ENCODE measurements at regions of chr18 and their contacts with region 1.

Region 1: GRCh38 chr18:46073474-46074331 is 1.6 kb upstream of the PSTPIP2 start:
- DNase-seq: peak; percentile 83
- H3K4me3 Mint-ChIP-seq: no peak overlapping the region
- H3K27ac Mint-ChIP-seq: no peak overlapping the region
- H3K4me1 Mint-ChIP-seq: peaks cover 33% of the 10 kb centered on the region
- H3K27me3 Mint-ChIP-seq: no peaks in the 10 kb centered on the region
- CTCF ChIP-seq: peak; percentile 47

Region 2: DNA sequence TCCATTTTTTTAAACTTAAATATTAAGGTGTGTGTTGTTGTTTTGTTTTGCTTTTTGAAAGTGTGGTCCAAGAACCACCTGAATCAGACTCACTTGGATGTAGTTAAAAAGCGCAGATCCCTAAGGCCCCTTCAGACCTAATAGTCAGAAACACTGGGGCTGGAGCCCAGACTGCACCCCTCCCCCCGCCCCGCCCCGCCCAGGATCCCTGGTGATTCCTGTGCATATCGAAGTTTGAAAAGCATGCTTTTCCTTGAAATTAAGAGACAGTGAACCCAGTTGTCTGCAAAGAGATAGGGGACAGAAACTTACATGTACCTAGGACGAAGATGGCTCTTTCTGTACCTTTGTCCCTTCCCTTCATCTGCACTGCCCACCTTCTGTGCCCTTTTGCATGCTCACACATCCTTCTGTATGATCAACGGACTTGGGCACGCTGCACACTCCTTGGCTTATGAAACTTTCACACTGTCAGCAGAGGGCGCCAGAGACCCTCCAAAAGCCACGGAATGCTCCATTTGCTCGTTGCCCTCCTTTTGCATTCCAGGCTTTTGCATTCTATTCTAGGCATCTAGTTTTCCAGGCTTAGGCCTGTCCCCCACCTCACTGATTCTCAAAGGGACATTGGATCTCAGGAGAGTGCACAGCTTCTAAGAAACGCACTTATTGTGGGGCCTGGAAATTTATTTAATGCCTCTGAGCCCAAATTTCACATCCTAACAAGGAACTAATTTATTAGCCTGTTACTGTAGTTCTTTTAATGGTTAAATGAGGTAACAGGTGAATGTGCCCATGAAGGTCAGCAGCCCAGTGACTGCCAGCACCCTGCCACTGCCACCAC is 382.5 kb before region 1 on chr18:
- CTCF ChIA-PET with region 1: interaction called, 3 read pairs
- POLR2A ChIA-PET with region 1: no interaction called
- intact Hi-C with region 1: loop called (anchors 1 kb)
- DNase-seq: peak; percentile 86
- H3K4me3 Mint-ChIP-seq: no peak overlapping the region
- H3K27ac Mint-ChIP-seq: no peak overlapping the region
- H3K4me1 Mint-ChIP-seq: peaks cover 10% of the 10 kb centered on the region
- H3K27me3 Mint-ChIP-seq: peaks cover 11% of the 10 kb centered on the region
- CTCF ChIP-seq: peak; percentile 90

Region 3: DNA sequence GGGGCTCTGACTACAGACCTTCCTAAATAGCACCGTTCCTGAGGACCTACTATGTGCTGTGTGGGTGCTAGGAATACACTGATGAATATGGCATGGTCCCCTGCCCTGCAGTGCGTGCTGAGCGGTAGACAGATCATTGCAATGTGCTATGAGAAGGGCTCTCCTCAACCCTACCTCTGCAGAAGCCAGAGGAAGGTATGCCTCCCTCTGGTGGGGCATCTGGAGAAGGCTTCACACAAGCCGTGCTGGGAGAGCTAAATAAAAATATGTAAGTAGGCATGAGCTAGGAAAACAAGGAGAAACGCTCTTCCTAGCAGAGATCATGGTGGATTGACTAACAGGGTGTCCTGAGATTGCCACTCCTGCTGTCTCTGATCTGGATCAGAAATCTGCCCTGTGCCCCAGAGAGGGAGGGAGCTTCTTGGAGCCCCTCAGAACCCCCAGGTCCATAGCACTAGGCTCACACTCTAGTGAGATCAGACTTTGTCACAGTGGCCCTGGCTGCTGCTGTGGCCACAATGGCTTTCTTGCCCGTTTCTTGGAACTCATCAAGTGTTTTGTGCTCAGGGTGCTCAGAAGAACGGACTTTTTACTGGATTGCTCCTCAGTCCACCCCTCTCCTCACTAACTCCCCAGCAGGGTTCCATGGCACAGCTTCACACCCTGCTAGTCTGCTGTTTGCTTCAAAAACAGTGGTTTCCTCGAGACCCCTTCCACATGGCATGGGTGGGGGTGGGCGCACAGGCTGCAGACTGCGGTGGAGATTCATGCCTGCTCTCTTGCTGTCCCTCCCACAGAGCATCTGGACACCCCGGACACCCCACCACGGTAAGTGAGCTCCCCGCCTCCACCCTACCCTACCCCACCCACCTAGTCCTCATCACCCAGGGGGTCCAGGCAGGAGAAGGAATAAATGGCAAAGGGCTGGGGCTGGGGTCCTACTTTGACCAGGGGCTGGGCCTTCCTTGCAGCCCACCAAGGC is 234.0 kb before region 1 on chr18:
- CTCF ChIA-PET with region 1: no interaction called
- POLR2A ChIA-PET with region 1: no interaction called
- intact Hi-C with region 1: no loop called
- DNase-seq: peak; percentile 71
- H3K4me3 Mint-ChIP-seq: no peak overlapping the region
- H3K27ac Mint-ChIP-seq: no peak overlapping the region
- H3K4me1 Mint-ChIP-seq: no peaks in the 10 kb centered on the region
- H3K27me3 Mint-ChIP-seq: peaks cover 13% of the 10 kb centered on the region
- CTCF ChIP-seq: peak; percentile 48

Region 4: GRCh38 chr18:45920367-45920766 is 153.3 kb before region 1 on chr18:
- CTCF ChIA-PET with region 1: interaction called, 6 read pairs
- POLR2A ChIA-PET with region 1: interaction called, 8 read pairs
- intact Hi-C with region 1: loop called (anchors 2 kb)
- DNase-seq: peak; percentile 97
- H3K4me3 Mint-ChIP-seq: no peak overlapping the region
- H3K27ac Mint-ChIP-seq: no peak overlapping the region
- H3K4me1 Mint-ChIP-seq: peaks cover 16% of the 10 kb centered on the region
- H3K27me3 Mint-ChIP-seq: no peaks in the 10 kb centered on the region
- CTCF ChIP-seq: no peak

Region 5: DNA sequence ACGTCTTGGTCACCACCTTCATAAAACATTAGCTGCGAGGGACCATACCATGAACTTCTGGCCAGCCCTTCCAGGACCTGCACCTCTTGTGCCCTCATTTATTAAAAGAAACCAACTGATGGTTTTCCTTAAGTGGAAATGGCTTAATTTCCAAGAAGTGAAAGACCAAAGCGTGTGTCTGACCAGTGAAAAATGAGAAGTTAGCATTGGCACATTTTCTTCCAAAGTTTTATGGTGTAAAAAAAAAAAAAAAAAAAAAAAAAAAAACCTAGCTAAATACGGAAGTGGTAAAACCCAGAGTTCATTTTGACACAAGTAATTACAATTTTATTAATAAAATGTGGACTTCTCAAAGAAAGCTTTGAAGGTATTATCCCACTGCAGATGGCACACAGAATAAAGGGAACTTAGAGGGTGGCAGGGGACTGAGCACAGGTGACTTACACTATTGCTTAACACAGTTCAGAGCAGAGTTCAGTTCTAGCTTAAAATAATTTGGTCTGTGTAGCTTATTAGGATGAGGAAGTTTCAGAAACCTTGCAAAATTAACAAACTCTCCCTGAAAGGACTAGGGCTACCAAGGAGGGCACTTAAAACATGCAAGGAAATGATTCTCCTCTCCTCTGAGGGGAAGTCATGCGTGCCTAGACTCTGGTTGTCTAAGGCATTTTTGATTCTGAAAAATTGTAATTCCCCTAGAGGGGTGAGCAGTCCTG is 64.4 kb before region 1 on chr18:
- CTCF ChIA-PET with region 1: interaction called, 14 read pairs
- POLR2A ChIA-PET with region 1: interaction called, 5 read pairs
- intact Hi-C with region 1: no loop called
- DNase-seq: no peak
- H3K4me3 Mint-ChIP-seq: no peak overlapping the region
- H3K27ac Mint-ChIP-seq: no peak overlapping the region
- H3K4me1 Mint-ChIP-seq: no peaks in the 10 kb centered on the region
- H3K27me3 Mint-ChIP-seq: no peaks in the 10 kb centered on the region
- CTCF ChIP-seq: no peak

Region 6: GRCh38 chr18:46051731-46052461 is 21.8 kb before region 1 on chr18:
- CTCF ChIA-PET with region 1: interaction called, 4 read pairs
- POLR2A ChIA-PET with region 1: interaction called, 17 read pairs
- intact Hi-C with region 1: no loop called
- DNase-seq: peak; percentile 52
- H3K4me3 Mint-ChIP-seq: no peak overlapping the region
- H3K27ac Mint-ChIP-seq: peak overlapping the region; percentile 91
- H3K4me1 Mint-ChIP-seq: peaks cover 37% of the 10 kb centered on the region
- H3K27me3 Mint-ChIP-seq: no peaks in the 10 kb centered on the region
- CTCF ChIP-seq: no peak

Region 7: DNA sequence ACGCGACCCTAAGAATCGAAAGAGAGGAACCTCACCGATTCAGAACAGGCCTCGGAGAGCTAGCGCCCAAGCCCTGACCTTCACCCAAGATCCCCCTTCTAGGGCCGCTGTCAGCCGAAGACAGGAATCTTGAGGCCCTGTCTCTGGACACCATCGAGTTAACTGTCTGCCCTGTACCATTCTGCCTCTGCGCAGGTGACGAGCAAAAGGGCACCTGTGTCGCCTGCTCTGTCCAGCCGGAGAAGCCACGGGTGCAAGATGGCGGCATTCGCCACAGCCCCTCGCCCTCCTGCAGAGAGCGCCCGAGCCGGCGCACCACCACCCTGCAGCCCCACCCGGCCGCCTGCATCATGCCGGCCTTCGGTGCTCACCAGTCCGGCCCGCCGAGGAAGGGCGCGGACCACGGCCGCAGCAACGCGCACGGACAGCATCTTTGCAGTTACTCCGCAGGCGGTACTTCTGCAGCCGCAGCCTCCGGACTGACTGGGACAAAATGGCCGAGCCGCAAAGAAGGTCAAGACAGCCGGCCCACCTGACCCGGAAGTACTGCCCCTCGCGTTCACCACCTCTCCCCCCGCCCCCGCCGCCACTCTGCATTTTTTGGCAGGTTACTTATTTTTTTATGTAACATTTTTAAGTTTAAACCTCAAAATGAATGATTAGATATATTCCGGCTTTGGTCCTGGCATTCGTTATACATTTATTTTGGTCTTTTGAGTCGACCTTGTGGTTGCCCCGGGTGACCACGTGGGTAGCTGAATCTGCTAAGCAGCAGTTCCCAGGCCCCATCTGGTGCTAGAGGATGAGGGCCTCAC is 24.3 kb after region 1 on chr18 and contains the start of gene ATP5F1A:
- CTCF ChIA-PET with region 1: interaction called, 15 read pairs
- POLR2A ChIA-PET with region 1: interaction called, 40 read pairs
- intact Hi-C with region 1: no loop called
- DNase-seq: peak; percentile 79
- H3K4me3 Mint-ChIP-seq: peak within 1 kb of the TSS; percentile 91
- H3K27ac Mint-ChIP-seq: peak within 1 kb of the TSS; percentile 93
- H3K4me1 Mint-ChIP-seq: peaks cover 5% of the 10 kb centered on the region
- H3K27me3 Mint-ChIP-seq: no peaks in the 10 kb centered on the region
- CTCF ChIP-seq: no peak
- total RNA-seq, gene ATP5F1A: 363 and 458 TPM in 2 replicates